Endothelial cell of umbilical vein (primary cell): ENCODE measurements at regions of chr15 and their contacts with region 1.

Region 1: GRCh38 chr15:41989259-41989933 is 17.0 kb upstream of the EHD4 start:
- DNase-seq: peak; percentile 77
- H3K4me3 ChIP-seq: no peak overlapping the region
- H3K27ac ChIP-seq: no peak overlapping the region
- H3K4me1 ChIP-seq: peaks cover 5% of the 10 kb centered on the region
- H3K27me3 ChIP-seq: no peaks in the 10 kb centered on the region
- CTCF ChIP-seq: peak; percentile 93 to 97
- POLR2A ChIP-seq: no peak

Region 2: GRCh38 chr15:41930221-41930866 is 59.1 kb before region 1 on chr15:
- CTCF ChIA-PET with region 1: interaction called, 15 read pairs
- POLR2A ChIA-PET with region 1: no interaction called
- dilution Hi-C with region 1: no loop called
- intact Hi-C with region 1: no loop called
- DNase-seq: peak; percentile 80
- H3K4me3 ChIP-seq: no peak overlapping the region
- H3K27ac ChIP-seq: peak overlapping the region; percentile 82
- H3K4me1 ChIP-seq: peaks cover 93% of the 10 kb centered on the region
- H3K27me3 ChIP-seq: no peaks in the 10 kb centered on the region
- CTCF ChIP-seq: peak; percentile 20 to 44
- POLR2A ChIP-seq: no peak

Region 3: GRCh38 chr15:42056934-42057779 is 67.8 kb after region 1 on chr15:
- CTCF ChIA-PET with region 1: interaction called, 116 read pairs
- POLR2A ChIA-PET with region 1: no interaction called
- dilution Hi-C with region 1: no loop called
- intact Hi-C with region 1: loop called (anchors 1 kb)
- DNase-seq: peak; percentile 84
- H3K4me3 ChIP-seq: peak overlapping the region in 1 of 3 experiments; percentile 3
- H3K27ac ChIP-seq: no peak overlapping the region
- H3K4me1 ChIP-seq: peaks cover 4% of the 10 kb centered on the region
- H3K27me3 ChIP-seq: peaks cover 2 to 7% of the 10 kb centered on the region in 2 experiments
- CTCF ChIP-seq: peak; percentile 81 to 85
- POLR2A ChIP-seq: no peak

Region 4: DNA sequence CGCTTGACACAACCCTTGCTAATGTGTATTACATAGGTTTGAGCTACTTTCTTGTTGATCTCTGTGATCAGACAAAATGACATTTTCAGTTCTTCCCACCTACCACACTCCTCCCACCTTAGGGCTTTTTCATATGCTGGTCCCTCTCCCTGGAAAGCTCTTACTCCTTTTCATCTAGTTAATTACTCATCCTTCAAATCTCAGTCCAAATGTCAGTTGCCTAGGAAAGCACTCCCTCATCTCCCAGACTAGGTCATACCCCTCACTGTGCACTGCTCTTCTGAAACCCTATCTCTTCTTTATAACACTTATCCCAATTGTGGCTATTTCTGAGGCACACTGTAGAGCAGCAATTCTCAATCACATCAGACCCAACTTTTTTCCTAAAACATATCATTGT is 494.3 kb after region 1 on chr15:
- CTCF ChIA-PET with region 1: no interaction called
- POLR2A ChIA-PET with region 1: no interaction called
- dilution Hi-C with region 1: no loop called
- intact Hi-C with region 1: no loop called
- DNase-seq: no peak
- H3K4me3 ChIP-seq: no peak overlapping the region
- H3K27ac ChIP-seq: no peak overlapping the region
- H3K4me1 ChIP-seq: no peaks in the 10 kb centered on the region
- H3K27me3 ChIP-seq: no peaks in the 10 kb centered on the region
- CTCF ChIP-seq: no peak
- POLR2A ChIP-seq: no peak